Tibial artery (tissue), 4 donors: ENCODE measurements at regions of chr1 and their contacts with region 1.

Region 1: GRCh38 chr1:174743654-174744561 is 255.8 kb upstream of the CACYBP start:
- DNase-seq: no peak
- H3K4me3 ChIP-seq: no peak overlapping the region
- H3K27ac ChIP-seq: no peak overlapping the region
- H3K4me1 ChIP-seq: no peaks in the 10 kb centered on the region
- H3K27me3 ChIP-seq: no peaks in the 10 kb centered on the region
- CTCF ChIP-seq: peak; percentile 36 to 42

Region 2: DNA sequence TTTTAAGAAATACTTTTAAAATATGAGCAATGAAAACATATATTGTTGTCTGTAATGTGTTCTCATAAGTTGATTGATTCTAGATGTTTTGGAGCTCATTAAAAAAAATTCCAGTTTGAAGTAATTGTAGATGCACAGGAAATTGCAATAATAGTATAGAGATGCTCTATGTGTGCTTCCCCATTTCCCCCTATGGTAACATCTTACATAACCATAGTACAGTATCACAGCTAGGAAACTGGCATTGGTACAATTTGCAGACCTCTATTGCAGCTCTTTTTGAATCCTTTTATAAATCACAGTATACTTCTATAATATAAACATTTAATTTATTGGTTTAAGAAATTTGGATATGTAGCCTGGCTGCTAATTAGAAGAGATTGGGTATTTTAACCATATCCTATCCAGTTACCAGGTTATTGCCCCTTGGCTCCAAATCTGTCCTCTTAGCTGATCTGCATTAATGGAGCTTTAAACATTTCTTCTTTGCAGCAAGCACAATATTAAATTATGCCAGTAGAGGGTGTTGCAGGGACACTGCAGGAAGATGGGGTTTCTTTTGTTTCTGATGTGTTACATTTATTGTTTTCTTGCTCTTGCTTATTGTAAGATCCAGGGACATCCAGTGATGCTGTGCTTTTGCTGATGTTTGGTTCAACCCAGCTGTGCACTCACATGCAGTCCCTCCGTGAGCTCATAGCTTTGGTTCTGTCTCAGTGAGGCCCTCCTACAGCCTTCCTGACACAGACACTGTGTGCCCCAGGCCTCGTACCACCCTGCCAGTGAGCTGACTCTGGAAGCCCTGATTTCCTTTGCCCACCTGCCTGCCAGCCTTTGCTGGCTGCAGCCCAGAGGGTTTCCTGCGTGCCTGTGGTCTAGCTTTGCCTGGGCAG is 481.3 kb before region 1 on chr1:
- intact Hi-C with region 1: loop called (anchors 5 kb)
- DNase-seq: no peak
- H3K4me3 ChIP-seq: no peak overlapping the region
- H3K27ac ChIP-seq: no peak overlapping the region
- H3K4me1 ChIP-seq: no peaks in the 10 kb centered on the region
- H3K27me3 ChIP-seq: no peaks in the 10 kb centered on the region
- CTCF ChIP-seq: peak; percentile 37 to 49

Region 3: GRCh38 chr1:176271572-176271971 is 1527.7 kb after region 1 on chr1:
- intact Hi-C with region 1: no loop called
- DNase-seq: no peak
- H3K4me3 ChIP-seq: no peak overlapping the region
- H3K27ac ChIP-seq: no peak overlapping the region
- H3K4me1 ChIP-seq: no peaks in the 10 kb centered on the region
- H3K27me3 ChIP-seq: no peaks in the 10 kb centered on the region
- CTCF ChIP-seq: no peak